ENCODE measurements at regions of chr2 and their contacts with region 1.

Region 1: DNA sequence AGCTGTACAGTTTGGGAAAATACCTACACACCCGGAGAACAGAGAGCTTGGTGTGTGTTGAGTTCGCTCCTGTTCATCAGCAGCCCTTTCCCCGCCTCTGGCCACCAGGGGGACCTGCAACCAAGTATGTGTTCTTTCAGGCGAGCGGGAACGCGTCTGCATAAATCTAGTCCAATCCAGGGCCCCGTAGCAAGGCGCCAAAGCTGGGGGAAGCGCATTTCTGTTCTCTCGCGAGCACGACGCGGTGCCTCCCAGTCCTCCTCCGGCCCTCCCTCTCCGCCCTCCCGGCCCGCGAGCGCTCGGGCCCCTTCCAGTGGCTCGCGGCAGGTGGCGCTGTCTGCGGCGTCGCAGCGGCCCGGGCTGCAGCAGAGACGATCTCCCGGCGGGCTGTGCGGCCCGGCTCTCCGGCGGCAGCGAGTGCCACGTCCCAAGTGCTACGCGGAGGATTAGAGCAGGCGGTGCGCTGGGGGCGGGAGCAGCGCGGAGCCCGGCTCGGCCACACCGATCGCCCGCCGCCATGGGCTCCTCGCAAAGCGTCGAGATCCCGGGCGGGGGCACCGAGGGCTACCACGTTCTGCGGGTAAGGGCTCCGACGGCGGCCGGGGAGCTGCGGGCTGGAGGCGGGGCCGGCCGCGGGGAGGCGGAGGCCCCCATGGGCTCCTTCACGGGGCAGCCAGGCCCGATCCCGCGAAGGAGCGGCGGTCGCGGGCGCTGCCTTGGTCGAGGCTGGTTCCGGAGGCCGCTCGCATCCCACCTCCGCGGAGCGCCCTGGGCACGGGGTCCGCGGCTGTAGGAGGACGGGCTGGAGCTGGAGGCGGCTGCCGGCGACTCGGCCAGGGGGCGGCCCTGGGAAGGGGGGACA is at the start of gene GORASP2:
- DNase-seq: peak; percentile 98
- CTCF ChIP-seq: peak; percentile 83

Region 2: GRCh38 chr2:170940066-170940465 is 11.0 kb after region 1 on chr2:
- CTCF ChIA-PET with region 1: interaction called, 59 read pairs
- POLR2A ChIA-PET with region 1: interaction called, 3 read pairs
- DNase-seq: no peak
- CTCF ChIP-seq: no peak

Region 3: GRCh38 chr2:170973492-170974303 is 44.6 kb after region 1 on chr2:
- CTCF ChIA-PET with region 1: interaction called, 24 read pairs
- POLR2A ChIA-PET with region 1: interaction called, 4 read pairs
- DNase-seq: peak; percentile 96
- CTCF ChIP-seq: peak; percentile 94

Region 4: GRCh38 chr2:170991399-170992182 is 62.5 kb after region 1 on chr2:
- CTCF ChIA-PET with region 1: no interaction called
- POLR2A ChIA-PET with region 1: no interaction called
- DNase-seq: no peak
- CTCF ChIP-seq: no peak